Heart left ventricle (tissue), 16 donors: ENCODE measurements at regions of chr16 and their contacts with region 1.

Region 1: DNA sequence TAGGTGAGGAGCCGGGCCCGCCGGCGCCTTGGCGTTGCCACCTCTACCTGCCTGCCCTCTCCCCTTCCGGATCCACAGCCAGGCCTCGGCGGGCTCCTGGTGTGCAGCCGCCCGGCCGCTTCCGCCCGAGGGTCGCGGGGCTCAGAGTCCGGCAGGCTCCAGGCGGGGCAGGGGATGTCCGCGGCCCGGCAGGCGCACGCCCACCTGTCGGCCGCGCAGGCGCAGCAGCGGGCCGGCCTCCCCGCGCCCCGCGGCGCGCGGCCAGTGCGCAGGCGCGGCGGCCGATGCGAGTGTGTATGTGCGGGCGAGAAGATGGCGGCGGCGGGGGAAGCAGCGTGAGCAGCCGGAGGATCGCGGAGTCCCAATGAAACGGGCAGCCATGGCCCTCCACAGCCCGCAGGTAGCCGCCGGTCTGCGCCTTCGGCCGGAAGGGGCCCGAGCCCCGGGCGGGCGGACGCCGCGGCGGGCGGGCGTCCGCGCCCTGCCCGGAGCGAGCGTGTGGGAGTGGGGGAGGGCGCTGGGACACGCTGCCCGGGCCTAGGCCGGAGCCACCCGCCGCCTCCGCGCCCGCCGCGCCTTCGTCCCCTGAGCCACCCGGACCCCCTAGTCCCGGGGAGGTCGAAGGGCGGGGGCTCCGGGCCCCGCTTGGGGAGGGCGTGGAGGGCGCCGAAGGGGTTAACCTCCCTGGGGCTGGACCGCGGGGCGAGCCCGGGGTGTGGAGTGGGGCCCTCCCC is at the start of gene USP10:
- DNase-seq: peak; percentile 76 to 91 (median 85)
- ATAC-seq: peak; percentile 36 to 94 (median 92)
- H3K4me3 ChIP-seq: peak within 1 kb of the TSS; percentile 72 to 99 (median 98)
- H3K27ac ChIP-seq: peak within 1 kb of the TSS; percentile 38 to 93 (median 86)
- H3K4me1 ChIP-seq: peaks cover 0 to 39% (median 22%) of the 10 kb centered on the region in 12 donors
- H3K27me3 ChIP-seq: no peaks in the 10 kb centered on the region
- CTCF ChIP-seq: no peak
- POLR2A ChIP-seq: peak in 1 of 2 donors; percentile 33
- total RNA-seq, gene USP10: 57.3 to 73.5 (median 62.9) TPM

Region 2: DNA sequence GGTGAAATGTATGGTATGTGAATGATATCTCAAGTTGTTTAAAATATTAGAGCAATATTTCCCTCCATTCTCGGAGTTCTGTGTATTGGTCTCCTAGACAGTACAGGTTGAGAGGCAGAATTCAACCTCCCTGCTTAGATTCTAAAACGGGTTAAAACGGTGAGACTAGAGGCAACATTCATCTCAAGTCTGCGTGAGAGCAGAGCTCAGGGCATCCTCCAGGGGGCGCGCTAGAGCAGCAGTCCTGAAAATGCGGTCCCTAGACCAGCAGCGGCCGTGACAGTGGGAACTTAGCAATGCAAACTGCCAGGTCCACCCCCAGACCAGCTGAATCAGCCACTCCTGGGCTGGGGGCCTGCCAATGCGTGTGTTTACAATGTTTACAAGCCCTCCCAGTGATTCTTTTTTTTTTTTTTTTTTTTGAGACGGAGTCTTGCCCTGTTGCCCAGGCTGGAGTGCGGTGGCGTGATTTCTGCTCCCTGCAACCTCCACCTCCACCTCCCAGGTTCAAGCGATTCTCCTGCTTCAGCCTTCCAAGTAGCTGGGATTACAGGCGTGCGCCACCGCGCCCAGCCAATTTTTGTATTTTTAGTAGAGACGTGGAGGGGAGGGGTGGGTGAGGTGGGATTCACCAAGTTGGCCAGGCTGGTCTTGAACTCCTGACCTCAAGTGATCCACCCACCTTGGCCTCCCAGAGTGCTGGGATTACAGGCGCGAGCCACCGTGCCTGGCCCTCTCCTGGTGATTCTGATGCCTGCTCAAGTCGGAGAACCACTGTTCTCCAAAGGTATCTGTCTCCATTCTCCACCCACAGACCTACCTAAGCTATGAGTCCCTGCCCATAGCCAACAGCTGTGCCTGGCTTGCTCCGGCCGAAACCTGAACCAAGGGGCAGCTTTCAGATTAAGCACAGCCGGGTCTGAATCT is 27.3 kb before region 1 on chr16:
- intact Hi-C with region 1: loop called in 1 of 10 experiments (anchors 2 kb)
- DNase-seq: peak; percentile 71 to 91 (median 80)
- ATAC-seq: peak; percentile 70 to 90 (median 86)
- H3K4me3 ChIP-seq: no peak overlapping the region
- H3K27ac ChIP-seq: no peak overlapping the region
- H3K4me1 ChIP-seq: peaks cover 0 to 5% (median 0%) of the 10 kb centered on the region in 12 donors
- H3K27me3 ChIP-seq: no peaks in the 10 kb centered on the region
- CTCF ChIP-seq: peak in 11 of 12 donors; percentile 84 to 96 (median 91)
- POLR2A ChIP-seq: no peak

Region 3: GRCh38 chr16:84751947-84752346 is 52.1 kb after region 1 on chr16:
- intact Hi-C with region 1: no loop called
- DNase-seq: no peak
- ATAC-seq: no peak
- H3K4me3 ChIP-seq: no peak overlapping the region
- H3K27ac ChIP-seq: peak overlapping the region in 1 of 12 donors; percentile 15
- H3K4me1 ChIP-seq: peaks cover 0 to 59% (median 16%) of the 10 kb centered on the region in 12 donors
- H3K27me3 ChIP-seq: no peaks in the 10 kb centered on the region
- CTCF ChIP-seq: no peak
- POLR2A ChIP-seq: no peak